ENCODE measurements at regions of chr14 and their contacts with region 1.

Region 1: DNA sequence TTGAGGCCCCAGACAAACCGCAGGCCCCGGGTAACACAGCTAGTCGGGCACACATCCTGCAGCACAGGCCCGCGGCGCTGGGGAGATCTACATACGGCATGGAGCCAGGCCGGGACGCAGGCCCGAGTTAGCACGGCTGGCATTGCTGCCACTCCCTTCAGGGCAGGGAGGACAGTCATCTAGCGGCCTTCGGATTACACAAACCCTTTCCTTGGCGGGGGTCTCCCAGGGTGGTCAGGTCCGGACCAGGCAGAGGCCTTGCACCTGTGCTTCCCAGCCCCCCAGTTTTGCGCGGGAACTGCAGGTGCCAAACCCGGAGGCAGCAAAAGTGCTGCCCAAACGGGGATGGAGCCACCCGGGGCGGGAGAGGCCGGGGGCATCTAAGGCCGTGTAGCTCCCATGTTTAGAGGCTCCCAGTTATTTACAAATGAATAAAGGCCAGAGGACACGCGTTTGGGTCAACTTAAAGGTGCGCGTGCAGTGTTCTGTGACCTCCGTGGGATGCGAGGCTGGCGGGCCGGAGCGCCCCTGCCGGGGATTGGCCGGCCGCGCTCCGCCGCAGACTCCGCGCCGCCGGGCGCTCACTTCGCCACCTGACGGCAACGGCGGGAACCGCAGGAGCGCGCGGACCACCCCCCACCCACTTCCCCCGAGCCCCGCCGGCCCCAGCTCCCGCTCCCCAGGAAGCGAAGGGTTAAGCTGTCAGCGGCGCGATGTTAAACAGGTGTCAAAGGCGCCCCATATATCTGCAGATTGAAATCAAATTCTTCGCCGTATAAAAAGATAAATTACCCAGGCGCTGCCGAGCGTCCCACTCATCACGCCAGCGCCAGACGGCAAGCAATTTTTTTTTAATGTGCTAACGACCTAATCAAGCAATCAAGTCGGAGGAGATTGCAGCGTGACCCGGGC is 18.1 kb downstream of the VSX2 start:
- DNase-seq: peak; percentile 31 to 75 (median 64)
- ATAC-seq: peak; percentile 98
- H3K4me3 ChIP-seq: peak overlapping the region; percentile 64
- H3K4me3 Mint-ChIP-seq: peak overlapping the region; percentile 80 to 89 (median 84)
- H3K27ac ChIP-seq: peak overlapping the region; percentile 51
- H3K27ac Mint-ChIP-seq: peak overlapping the region in 2 of 9 donors; percentile 26 to 71
- H3K4me1 ChIP-seq: peaks cover 0 to 5% of the 10 kb centered on the region in 2 donors
- H3K4me1 Mint-ChIP-seq: peaks cover 0 to 7% (median 4%) of the 10 kb centered on the region in 7 donors
- H3K27me3 ChIP-seq: no peaks in the 10 kb centered on the region
- H3K27me3 Mint-ChIP-seq: peaks cover 0 to 48% (median 0%) of the 10 kb centered on the region in 5 donors

Region 2: DNA sequence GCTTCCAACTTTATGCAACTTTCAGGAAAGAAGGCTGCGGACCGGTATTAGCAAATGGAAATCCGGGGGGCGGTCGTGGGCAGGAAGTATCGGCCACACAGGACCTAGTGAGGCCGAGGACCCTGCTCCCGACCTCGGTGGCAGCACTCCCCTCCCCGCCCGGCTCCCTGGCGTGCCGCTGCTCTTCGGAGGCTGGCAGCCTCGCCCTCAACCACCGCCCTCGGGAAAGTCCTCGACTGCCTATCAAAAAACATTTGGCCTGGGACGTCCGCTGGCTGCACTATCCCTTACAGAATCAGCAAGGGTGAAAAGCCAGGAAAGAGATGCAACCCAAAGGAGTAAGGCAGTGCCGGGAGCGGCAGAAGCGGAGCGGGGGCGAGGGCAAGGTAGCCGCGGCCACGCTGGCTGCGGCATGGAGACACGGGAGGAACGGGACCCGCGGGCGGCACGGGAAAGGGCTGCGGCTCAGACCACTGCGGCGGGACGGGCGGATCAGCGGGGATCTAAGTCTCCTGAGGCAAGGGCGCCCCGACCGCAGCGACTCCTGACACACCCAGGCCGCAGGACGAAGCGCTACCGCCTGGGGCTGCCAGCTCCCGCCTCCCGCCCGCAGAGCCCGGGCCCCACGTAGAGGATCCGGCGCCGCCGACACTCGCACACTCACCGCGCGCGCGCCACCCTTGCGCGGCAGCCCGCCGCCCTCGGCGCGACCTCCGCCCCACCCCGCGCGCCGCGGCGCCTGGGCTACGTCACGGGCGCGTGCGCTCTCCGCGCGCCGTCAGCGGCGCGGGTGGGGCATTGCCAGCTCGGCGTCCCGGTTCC is 238.5 kb before region 1 on chr14 and contains the starts of genes BBOF1 and ENTPD5:
- CTCF ChIA-PET with region 1: no interaction called
- POLR2A ChIA-PET with region 1: no interaction called
- intact Hi-C with region 1: loop called in 1 of 2 experiments (anchors 1 kb)
- DNase-seq: peak; percentile 83 to 89 (median 88)
- ATAC-seq: peak; percentile 98
- H3K4me3 ChIP-seq: peak within 1 kb of the TSS; percentile 79
- H3K4me3 Mint-ChIP-seq: peak within 1 kb of the TSS; percentile 80 to 97 (median 94)
- H3K27ac ChIP-seq: peak within 1 kb of the TSS; percentile 93
- H3K27ac Mint-ChIP-seq: peak within 1 kb of the TSS; percentile 89 to 98 (median 96)
- H3K4me1 ChIP-seq: peaks cover 6 to 10% of the 10 kb centered on the region in 2 donors
- H3K4me1 Mint-ChIP-seq: peaks cover 7 to 24% (median 14%) of the 10 kb centered on the region in 7 donors
- H3K27me3 ChIP-seq: no peaks in the 10 kb centered on the region
- H3K27me3 Mint-ChIP-seq: peaks cover 0 to 2% (median 0%) of the 10 kb centered on the region in 5 donors
- total RNA-seq, gene BBOF1: 0.80 to 4.0 (median 2.6) TPM
- total RNA-seq, gene ENTPD5: 8.6 to 17.1 (median 11.2) TPM

Region 3: DNA sequence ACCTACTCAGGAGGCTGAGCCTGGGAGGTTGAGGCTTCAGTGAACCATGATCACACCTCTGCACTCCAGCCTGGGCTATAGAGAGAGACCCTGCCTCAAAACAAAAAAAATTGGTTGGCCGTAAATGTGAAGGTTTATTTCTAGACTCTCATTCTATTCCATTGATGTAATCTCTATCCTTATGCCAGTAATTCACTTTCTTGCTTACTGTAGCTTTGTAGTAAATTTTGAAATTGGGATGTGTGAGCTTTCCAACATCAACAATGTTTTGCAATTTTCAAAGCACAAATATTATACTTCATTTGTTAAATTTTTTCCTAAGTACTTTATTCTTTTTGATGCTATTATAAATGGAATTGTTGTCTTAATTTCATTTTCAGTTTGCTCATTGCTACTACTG is 148.0 kb before region 1 on chr14:
- CTCF ChIA-PET with region 1: interaction called, 3 read pairs
- POLR2A ChIA-PET with region 1: no interaction called
- intact Hi-C with region 1: loop called (anchors 1 kb)
- DNase-seq: no peak
- ATAC-seq: no peak
- H3K4me3 ChIP-seq: no peak overlapping the region
- H3K4me3 Mint-ChIP-seq: no peak overlapping the region
- H3K27ac ChIP-seq: no peak overlapping the region
- H3K27ac Mint-ChIP-seq: no peak overlapping the region
- H3K4me1 ChIP-seq: no peaks in the 10 kb centered on the region
- H3K4me1 Mint-ChIP-seq: peaks cover 0 to 2% (median 0%) of the 10 kb centered on the region in 7 donors
- H3K27me3 ChIP-seq: no peaks in the 10 kb centered on the region
- H3K27me3 Mint-ChIP-seq: no peaks in the 10 kb centered on the region

Region 4: DNA sequence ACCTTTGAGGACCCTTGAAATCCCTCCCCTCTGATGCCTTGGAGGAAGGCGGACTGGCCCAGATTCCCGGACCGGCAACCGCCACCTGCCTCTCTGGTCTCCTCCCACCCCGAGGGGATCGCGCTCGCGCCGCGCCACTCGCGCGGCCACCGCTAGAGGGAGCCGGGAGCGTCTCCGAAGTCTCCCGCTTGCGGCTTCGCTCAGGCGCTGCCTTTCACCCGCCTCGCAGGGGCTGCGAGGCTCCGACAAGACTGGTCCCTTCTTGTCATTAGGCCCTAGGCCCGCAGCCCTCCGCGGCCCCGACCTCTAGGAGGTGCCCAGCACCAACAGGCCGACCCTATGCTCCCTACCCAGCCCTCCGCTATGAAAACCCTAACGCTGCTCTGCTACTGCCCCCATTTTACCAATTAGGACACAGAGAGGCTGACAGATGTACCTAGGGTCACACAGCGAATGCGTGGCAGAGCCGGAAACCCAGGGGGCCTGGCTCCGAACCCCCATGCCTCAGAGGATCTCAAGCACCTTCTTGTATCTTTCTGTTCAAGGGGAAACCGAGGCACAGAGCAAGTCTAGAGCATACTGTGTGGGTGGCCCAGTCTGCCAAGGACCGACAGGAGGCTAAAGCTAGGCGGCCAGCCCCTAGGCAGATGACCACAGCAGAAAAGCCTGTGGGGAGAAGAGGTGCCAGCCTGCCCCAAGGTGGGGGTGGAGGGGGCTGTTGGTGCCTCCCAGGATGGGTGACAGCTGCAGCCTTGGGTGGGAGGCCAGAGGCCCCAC is 39.5 kb before region 1 on chr14:
- CTCF ChIA-PET with region 1: interaction called, 12 read pairs
- POLR2A ChIA-PET with region 1: interaction called, 3 read pairs
- intact Hi-C with region 1: no loop called
- DNase-seq: peak; percentile 41 to 78 (median 59)
- ATAC-seq: peak; percentile 91
- H3K4me3 ChIP-seq: peak overlapping the region; percentile 36
- H3K4me3 Mint-ChIP-seq: peak overlapping the region in 8 of 10 donors; percentile 12 to 64 (median 54)
- H3K27ac ChIP-seq: no peak overlapping the region
- H3K27ac Mint-ChIP-seq: peak overlapping the region in 1 of 9 donors; percentile 36
- H3K4me1 ChIP-seq: peaks cover 0 to 6% of the 10 kb centered on the region in 2 donors
- H3K4me1 Mint-ChIP-seq: peaks cover 0 to 5% (median 0%) of the 10 kb centered on the region in 7 donors
- H3K27me3 ChIP-seq: no peaks in the 10 kb centered on the region
- H3K27me3 Mint-ChIP-seq: peaks cover 7 to 26% (median 13%) of the 10 kb centered on the region in 5 donors

Region 5: DNA sequence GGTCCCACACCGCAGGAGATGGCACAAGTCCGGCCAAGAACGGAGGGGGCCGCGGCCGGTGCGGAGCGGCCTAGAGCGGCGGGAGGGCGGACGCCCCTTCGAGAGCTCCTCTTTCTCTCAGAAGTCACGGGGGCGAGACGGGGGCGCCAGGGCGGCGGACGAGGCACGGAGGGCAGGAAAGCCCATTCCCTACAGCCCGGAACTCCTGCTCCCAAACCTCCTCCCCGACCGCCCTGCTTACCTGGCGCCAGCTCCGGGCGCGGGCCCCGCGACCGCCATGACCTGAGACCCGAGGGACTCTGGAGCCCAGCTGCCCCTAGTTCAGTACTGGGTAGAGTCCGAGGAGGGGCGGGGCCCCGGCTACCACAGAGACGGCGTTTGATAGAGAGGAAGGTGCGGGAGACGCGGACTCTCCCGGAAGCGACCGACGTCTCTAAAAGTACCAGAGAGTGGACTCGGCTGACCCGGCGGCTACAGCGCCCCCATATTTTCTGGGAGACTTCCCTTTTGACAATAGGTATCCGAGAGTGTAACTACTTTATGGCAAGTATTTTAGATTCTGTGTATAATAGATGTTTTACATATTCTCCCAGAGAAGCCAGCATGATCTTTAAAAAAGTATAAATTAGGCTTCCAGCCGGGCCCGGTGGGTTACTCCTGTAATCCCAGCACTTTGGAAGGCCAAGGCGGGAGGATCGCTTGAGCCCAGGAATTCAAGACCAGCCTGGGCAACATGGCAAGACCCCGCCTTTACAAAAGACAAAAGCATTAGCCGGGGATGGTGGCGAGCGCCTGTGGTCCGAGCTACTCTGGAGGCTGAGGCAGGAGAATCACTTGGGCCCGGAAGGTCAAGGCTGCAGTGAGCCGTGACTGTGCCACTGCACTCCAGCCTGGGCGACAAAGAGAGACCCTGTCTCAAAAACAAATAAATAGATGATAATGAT is 45.6 kb after region 1 on chr14 and contains the start of gene ABCD4:
- CTCF ChIA-PET with region 1: interaction called, 3 read pairs
- POLR2A ChIA-PET with region 1: no interaction called
- intact Hi-C with region 1: loop called in 1 of 2 experiments (anchors 1 kb)
- DNase-seq: peak; percentile 50 to 85 (median 65)
- ATAC-seq: peak; percentile 95
- H3K4me3 ChIP-seq: peak within 1 kb of the TSS; percentile 87
- H3K4me3 Mint-ChIP-seq: peak within 1 kb of the TSS; percentile 90 to 100 (median 96)
- H3K27ac ChIP-seq: peak within 1 kb of the TSS; percentile 77
- H3K27ac Mint-ChIP-seq: peak within 1 kb of the TSS; percentile 81 to 99 (median 96)
- H3K4me1 ChIP-seq: peaks cover 17 to 19% of the 10 kb centered on the region in 2 donors
- H3K4me1 Mint-ChIP-seq: peaks cover 18 to 49% (median 33%) of the 10 kb centered on the region in 7 donors
- H3K27me3 ChIP-seq: no peaks in the 10 kb centered on the region
- H3K27me3 Mint-ChIP-seq: no peaks in the 10 kb centered on the region
- total RNA-seq, gene ABCD4: 57.6 to 109 (median 68.2) TPM

Region 6: GRCh38 chr14:74324931-74325361 is 67.6 kb after region 1 on chr14:
- CTCF ChIA-PET with region 1: no interaction called
- POLR2A ChIA-PET with region 1: no interaction called
- intact Hi-C with region 1: no loop called
- DNase-seq: no peak
- ATAC-seq: no peak
- H3K4me3 ChIP-seq: no peak overlapping the region
- H3K4me3 Mint-ChIP-seq: no peak overlapping the region
- H3K27ac ChIP-seq: no peak overlapping the region
- H3K27ac Mint-ChIP-seq: peak overlapping the region in 1 of 9 donors; percentile 70
- H3K4me1 ChIP-seq: no peaks in the 10 kb centered on the region
- H3K4me1 Mint-ChIP-seq: peaks cover 0 to 2% (median 0%) of the 10 kb centered on the region in 7 donors
- H3K27me3 ChIP-seq: no peaks in the 10 kb centered on the region
- H3K27me3 Mint-ChIP-seq: peaks cover 5 to 22% (median 10%) of the 10 kb centered on the region in 5 donors

Region 7: GRCh38 chr14:74414403-74415114 is 157.2 kb after region 1 on chr14:
- CTCF ChIA-PET with region 1: no interaction called
- POLR2A ChIA-PET with region 1: no interaction called
- intact Hi-C with region 1: no loop called
- DNase-seq: no peak
- ATAC-seq: no peak
- H3K4me3 ChIP-seq: no peak overlapping the region
- H3K4me3 Mint-ChIP-seq: no peak overlapping the region
- H3K27ac ChIP-seq: no peak overlapping the region
- H3K27ac Mint-ChIP-seq: no peak overlapping the region
- H3K4me1 ChIP-seq: no peaks in the 10 kb centered on the region
- H3K4me1 Mint-ChIP-seq: no peaks in the 10 kb centered on the region
- H3K27me3 ChIP-seq: no peaks in the 10 kb centered on the region
- H3K27me3 Mint-ChIP-seq: peaks cover 10 to 29% (median 20%) of the 10 kb centered on the region in 5 donors

Measured in naive thymus-derived CD4-positive, alpha-beta T cell (primary cell).